OCI-LY7 (cell line): ENCODE measurements at regions of chr12 and their contacts with region 1.

Region 1: DNA sequence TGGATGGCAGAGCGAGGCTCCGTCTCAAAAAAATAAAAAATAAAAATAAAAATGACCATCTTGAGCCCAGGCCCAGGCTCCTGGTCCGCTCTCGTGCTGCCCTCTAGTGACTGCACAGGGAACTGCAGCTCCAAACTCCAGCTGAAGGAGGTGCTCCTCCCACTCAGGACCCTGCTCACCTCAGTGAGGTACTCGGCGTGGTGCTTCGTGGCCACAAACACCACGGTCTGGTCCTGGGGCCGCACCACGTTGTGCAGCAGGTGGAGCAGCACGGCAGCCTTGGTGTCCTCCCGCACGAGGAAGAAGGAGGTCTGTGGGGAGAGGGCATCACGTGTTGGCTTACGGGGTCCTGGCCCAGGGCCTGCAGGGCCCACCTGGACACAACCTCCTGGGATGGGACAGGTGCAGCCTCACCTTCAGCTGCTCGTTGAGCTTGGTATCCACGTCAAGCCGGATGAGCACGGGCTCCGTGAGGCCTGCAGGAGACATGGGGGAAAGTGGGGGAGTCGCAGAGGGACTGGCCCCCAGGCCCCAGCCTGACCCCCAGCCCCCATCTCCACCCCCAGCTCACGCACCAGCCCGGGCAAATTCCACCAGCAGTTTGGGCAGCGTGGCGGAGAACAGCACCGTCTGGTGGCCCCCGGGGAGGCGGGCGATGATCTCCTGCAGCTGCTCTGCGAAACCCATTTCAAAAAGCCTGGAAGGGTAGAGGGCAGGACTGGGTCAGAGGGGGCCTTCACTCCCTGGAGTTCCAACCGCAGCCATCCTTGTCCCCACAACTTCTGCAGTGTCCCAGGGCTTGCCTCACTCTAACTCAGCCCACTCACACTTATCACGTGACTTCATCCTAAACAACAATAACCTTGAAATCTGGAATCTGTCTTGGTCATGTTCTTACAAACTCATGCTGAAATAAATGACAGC is 10.6 kb downstream of the DDX54 start:
- DNase-seq: peak; percentile 84
- H3K4me3 ChIP-seq: peak overlapping the region; percentile 10
- H3K27ac ChIP-seq: peak overlapping the region; percentile 98
- H3K4me1 ChIP-seq: peaks cover 46% of the 10 kb centered on the region
- CTCF ChIP-seq: peak; percentile 94

Region 2: GRCh38 chr12:112978163-112979040 is 196.3 kb before region 1 on chr12 and contains the start of gene OAS2:
- CTCF ChIA-PET with region 1: no interaction called
- POLR2A ChIA-PET with region 1: interaction called, 5 read pairs
- intact Hi-C with region 1: loop called (anchors 5 kb)
- DNase-seq: peak; percentile 93
- H3K4me3 ChIP-seq: peak within 1 kb of the TSS; percentile 81
- H3K27ac ChIP-seq: peak within 1 kb of the TSS; percentile 90
- H3K4me1 ChIP-seq: peaks cover 41% of the 10 kb centered on the region
- CTCF ChIP-seq: no peak
- total RNA-seq, gene OAS2: 22.7 and 33.2 TPM in 2 replicates

Region 3: GRCh38 chr12:112998987-112999767 is 175.5 kb before region 1 on chr12:
- CTCF ChIA-PET with region 1: no interaction called
- POLR2A ChIA-PET with region 1: interaction called, 11 read pairs
- intact Hi-C with region 1: no loop called
- DNase-seq: peak; percentile 98
- H3K4me3 ChIP-seq: peak overlapping the region; percentile 41
- H3K27ac ChIP-seq: peak overlapping the region; percentile 99
- H3K4me1 ChIP-seq: peaks cover 45% of the 10 kb centered on the region
- CTCF ChIP-seq: no peak

Region 4: GRCh38 chr12:113075137-113075683 is 99.5 kb before region 1 on chr12:
- CTCF ChIA-PET with region 1: no interaction called
- POLR2A ChIA-PET with region 1: interaction called, 8 read pairs
- intact Hi-C with region 1: loop called (anchors 1 kb)
- DNase-seq: peak; percentile 99
- H3K4me3 ChIP-seq: peak overlapping the region; percentile 34
- H3K27ac ChIP-seq: peak overlapping the region; percentile 97
- H3K4me1 ChIP-seq: peaks cover 95% of the 10 kb centered on the region
- CTCF ChIP-seq: no peak

Region 5: DNA sequence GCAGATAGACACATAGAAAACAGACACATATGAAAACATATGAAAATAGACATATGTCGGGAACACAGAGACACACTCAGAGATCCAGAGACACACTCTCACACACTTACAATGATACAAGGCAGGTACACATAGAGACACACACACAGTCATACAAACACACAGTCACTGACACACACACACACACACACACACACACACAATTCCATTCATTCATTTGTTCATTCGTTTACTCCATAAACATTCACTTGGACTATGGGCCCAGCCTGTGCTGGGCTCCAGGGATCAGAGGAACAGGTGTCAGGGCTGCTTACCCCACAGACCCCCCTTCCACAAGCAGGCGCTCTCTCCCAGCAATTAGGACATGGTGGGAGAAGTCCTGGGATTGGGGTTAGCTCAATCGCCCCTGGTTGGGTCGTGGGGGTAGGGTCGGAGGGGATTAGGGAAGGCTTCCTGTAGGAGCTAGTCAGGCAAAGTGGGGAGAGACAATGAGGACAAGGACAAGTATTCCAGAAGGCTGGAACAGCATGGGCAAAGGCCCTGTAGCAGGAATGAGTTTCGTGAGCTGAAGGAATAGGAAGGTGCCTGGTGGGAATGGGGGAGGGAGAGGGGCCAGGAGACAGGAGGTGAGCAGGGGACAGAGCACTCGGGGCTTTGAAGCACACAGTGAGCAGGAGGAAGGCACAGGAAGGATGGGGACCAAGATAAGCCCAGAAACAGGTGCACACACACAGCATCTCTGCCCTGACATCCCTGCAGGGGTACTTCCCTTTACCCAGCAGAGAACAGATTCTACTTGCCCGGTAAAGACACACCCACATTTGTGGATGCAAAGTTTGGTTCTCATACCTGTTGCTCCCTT is 45.7 kb before region 1 on chr12:
- CTCF ChIA-PET with region 1: interaction called, 10 read pairs
- POLR2A ChIA-PET with region 1: interaction called, 12 read pairs
- intact Hi-C with region 1: loop called (anchors 1 kb)
- DNase-seq: peak; percentile 89
- H3K4me3 ChIP-seq: peak overlapping the region; percentile 57
- H3K27ac ChIP-seq: peak overlapping the region; percentile 87
- H3K4me1 ChIP-seq: peaks cover 61% of the 10 kb centered on the region
- CTCF ChIP-seq: peak; percentile 51

Region 6: GRCh38 chr12:113152835-113153814 is 21.6 kb before region 1 on chr12:
- CTCF ChIA-PET with region 1: interaction called, 5 read pairs
- POLR2A ChIA-PET with region 1: interaction called, 25 read pairs
- intact Hi-C with region 1: loop called (anchors 1 kb)
- DNase-seq: peak; percentile 92
- H3K4me3 ChIP-seq: peak overlapping the region; percentile 78
- H3K27ac ChIP-seq: peak overlapping the region; percentile 90
- H3K4me1 ChIP-seq: peaks cover 57% of the 10 kb centered on the region
- CTCF ChIP-seq: peak; percentile 79

Region 7: GRCh38 chr12:113184900-113185773 is 10.4 kb after region 1 on chr12 and contains the starts of genes DDX54 and RITA1:
- CTCF ChIA-PET with region 1: interaction called, 3 read pairs
- POLR2A ChIA-PET with region 1: interaction called, 20 read pairs
- intact Hi-C with region 1: no loop called
- DNase-seq: peak; percentile 95
- H3K4me3 ChIP-seq: peak within 1 kb of the TSS; percentile 92
- H3K27ac ChIP-seq: peak within 1 kb of the TSS; percentile 86
- H3K4me1 ChIP-seq: peaks cover 44% of the 10 kb centered on the region
- CTCF ChIP-seq: no peak
- total RNA-seq, gene DDX54: 86.0 and 87.2 TPM in 2 replicates
- total RNA-seq, gene RITA1: 72.5 and 90.8 TPM in 2 replicates

Region 8: GRCh38 chr12:113232840-113233585 is 58.3 kb after region 1 on chr12:
- CTCF ChIA-PET with region 1: no interaction called
- POLR2A ChIA-PET with region 1: no interaction called
- intact Hi-C with region 1: no loop called
- DNase-seq: peak; percentile 94
- H3K4me3 ChIP-seq: peak overlapping the region; percentile 19
- H3K27ac ChIP-seq: peak overlapping the region; percentile 74
- H3K4me1 ChIP-seq: peaks cover 62% of the 10 kb centered on the region
- CTCF ChIP-seq: peak; percentile 76

Region 9: DNA sequence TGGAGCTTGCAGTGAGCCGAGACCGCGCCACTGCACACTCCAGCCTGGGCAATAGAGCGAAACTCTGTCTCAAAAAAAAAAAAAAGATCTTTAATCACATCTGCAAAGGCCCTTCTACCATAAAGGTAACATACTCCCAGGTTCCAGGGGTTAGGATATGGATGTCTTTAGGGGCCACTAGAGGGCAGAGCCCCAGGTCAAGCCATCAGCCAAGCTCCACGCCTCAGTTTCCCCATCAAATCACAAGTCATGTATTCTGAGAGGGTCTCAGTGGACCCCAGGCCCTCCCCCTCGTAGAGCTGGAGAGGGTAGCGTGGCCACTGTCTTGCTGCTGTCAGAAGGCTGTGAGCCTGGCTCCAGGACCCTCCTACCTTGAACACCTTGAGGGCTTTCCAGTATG is 141.4 kb after region 1 on chr12:
- CTCF ChIA-PET with region 1: no interaction called
- POLR2A ChIA-PET with region 1: no interaction called
- intact Hi-C with region 1: no loop called
- DNase-seq: no peak
- H3K4me3 ChIP-seq: no peak overlapping the region
- H3K27ac ChIP-seq: no peak overlapping the region
- H3K4me1 ChIP-seq: peaks cover 21% of the 10 kb centered on the region
- CTCF ChIP-seq: peak; percentile 65

Region 10: DNA sequence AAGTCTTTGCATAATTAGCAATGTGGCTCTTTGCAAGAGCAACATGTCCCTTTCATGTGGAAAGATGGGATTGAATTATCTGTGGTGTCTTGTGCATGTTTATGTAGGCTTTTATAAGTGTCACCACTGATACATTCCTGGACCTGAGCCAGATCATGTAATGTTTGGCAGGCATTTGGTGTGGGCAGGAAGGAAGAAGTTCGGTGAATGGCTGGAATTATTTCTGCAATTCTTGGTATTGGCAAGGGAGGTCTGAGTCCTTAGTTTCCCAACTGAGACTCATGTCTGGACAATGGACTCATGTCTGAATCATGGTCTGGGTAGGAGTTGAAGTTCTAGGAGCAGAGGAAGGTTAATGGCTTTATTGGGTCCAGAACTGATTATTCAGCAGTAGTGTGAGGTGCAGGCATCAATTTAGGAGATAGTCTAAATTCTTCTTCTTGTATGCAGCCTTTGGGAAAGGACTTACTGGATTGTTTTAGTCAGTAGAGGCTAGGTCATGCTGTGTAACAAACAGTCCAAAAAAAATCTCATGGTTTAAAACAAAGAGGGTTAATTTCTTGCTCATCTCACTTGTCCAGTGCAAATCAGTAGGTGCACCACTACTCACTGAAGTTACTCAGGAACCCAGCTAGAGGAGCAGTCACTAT is 483.4 kb after region 1 on chr12:
- CTCF ChIA-PET with region 1: no interaction called
- POLR2A ChIA-PET with region 1: no interaction called
- intact Hi-C with region 1: no loop called
- DNase-seq: no peak
- H3K4me3 ChIP-seq: no peak overlapping the region
- H3K27ac ChIP-seq: no peak overlapping the region
- H3K4me1 ChIP-seq: no peaks in the 10 kb centered on the region
- CTCF ChIP-seq: no peak